Calu3 (cell line): ENCODE measurements at regions of chr6 and their contacts with region 1.

Region 1: DNA sequence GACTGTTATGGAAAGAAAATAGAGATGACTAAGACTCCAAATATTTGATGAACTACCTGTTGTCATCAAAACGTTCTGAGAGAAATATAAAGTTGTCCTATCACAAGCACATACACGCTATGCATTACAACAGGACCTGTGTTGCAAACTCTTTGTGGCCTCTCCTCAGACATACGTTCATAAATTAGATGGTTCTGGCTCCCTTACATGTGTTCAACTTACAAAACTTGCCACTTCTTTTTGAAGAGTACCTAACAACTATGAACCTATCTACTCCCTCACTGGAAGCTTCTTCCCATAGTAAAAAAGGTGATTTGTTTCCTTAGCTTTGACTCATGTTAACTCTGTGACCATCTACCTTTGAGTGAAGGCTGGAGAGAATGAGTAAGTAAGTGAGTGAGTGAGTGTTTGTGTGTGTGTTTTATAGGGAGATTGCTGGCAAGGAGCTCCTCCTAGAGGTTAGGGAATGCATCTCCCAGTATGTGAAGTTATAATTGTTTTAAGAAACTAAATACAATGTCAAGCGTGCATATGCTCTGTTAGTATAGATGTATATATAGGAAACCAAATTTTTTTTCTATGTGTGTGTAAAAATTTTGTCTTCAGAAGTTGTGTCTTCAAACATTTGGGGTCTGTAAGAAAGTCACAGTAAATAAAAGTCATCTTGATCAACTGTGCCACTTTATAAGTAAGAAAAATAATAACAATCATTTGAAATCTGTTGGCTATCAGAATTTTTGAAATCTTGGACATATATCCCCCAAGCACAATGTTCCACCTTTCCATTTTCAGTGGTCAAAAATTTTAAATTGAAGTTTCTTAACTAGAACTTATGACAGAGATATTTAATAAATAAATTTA is 1211.1 kb upstream of the GJE1 start:
- DNase-seq: peak; percentile 37
- H3K4me3 Mint-ChIP-seq: no peak overlapping the region
- H3K27ac Mint-ChIP-seq: no peak overlapping the region
- H3K4me1 Mint-ChIP-seq: peaks cover 15% of the 10 kb centered on the region
- H3K27me3 Mint-ChIP-seq: no peaks in the 10 kb centered on the region
- CTCF ChIP-seq: no peak

Region 2: GRCh38 chr6:140269591-140270165 is 651.9 kb before region 1 on chr6:
- CTCF ChIA-PET with region 1: no interaction called
- intact Hi-C with region 1: loop called (anchors 10 kb)
- DNase-seq: no peak
- H3K4me3 Mint-ChIP-seq: no peak overlapping the region
- H3K27ac Mint-ChIP-seq: no peak overlapping the region
- H3K4me1 Mint-ChIP-seq: no peaks in the 10 kb centered on the region
- H3K27me3 Mint-ChIP-seq: no peaks in the 10 kb centered on the region
- CTCF ChIP-seq: no peak

Region 3: DNA sequence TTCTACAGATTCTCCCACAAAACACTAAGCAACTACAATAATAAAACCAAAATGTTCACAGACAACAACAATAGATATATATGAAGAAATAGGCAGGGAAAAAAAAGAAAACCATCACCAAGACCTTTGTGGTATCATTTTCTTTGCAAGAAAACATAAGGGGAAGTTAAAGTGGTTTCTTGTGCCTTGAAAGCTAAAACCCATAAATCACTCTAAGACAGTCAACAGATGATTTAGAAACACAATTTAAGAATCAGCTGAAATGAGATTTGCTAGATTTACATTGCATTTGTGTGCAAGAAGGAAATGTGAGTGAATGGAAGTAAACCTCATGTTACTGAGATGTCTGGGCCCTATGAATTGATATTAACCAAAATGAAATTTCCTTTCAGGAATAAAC is 54.3 kb before region 1 on chr6:
- CTCF ChIA-PET with region 1: no interaction called
- intact Hi-C with region 1: no loop called
- DNase-seq: no peak
- H3K4me3 Mint-ChIP-seq: no peak overlapping the region
- H3K27ac Mint-ChIP-seq: no peak overlapping the region
- H3K4me1 Mint-ChIP-seq: no peaks in the 10 kb centered on the region
- H3K27me3 Mint-ChIP-seq: no peaks in the 10 kb centered on the region
- CTCF ChIP-seq: no peak